ENCODE measurements at regions of chr5 and their contacts with region 1.

Region 1: GRCh38 chr5:138425079-138425478 is 13.8 kb upstream of the REEP2 start:
- DNase-seq: no peak
- ATAC-seq: no peak
- H3K4me3 ChIP-seq: no peak overlapping the region
- H3K27ac ChIP-seq: no peak overlapping the region
- H3K4me1 ChIP-seq: no peaks in the 10 kb centered on the region
- H3K27me3 ChIP-seq: no peaks in the 10 kb centered on the region
- CTCF ChIP-seq: no peak
- POLR2A ChIP-seq: no peak
- RAD21 ChIP-seq: no peak

Region 2: GRCh38 chr5:138386290-138386689 is 38.8 kb before region 1 on chr5:
- CTCF ChIA-PET with region 1: interaction called, 3 read pairs
- POLR2A ChIA-PET with region 1: no interaction called
- dilution Hi-C with region 1: no loop called
- in situ Hi-C with region 1: no loop called
- intact Hi-C with region 1: loop called (anchors 5 kb)
- DNase-seq: no peak
- ATAC-seq: no peak
- H3K4me3 ChIP-seq: no peak overlapping the region
- H3K27ac ChIP-seq: no peak overlapping the region
- H3K4me1 ChIP-seq: no peaks in the 10 kb centered on the region
- H3K27me3 ChIP-seq: no peaks in the 10 kb centered on the region
- CTCF ChIP-seq: no peak
- POLR2A ChIP-seq: no peak
- RAD21 ChIP-seq: no peak